ENCODE measurements at regions of chr5 and their contacts with region 1.

Region 1: DNA sequence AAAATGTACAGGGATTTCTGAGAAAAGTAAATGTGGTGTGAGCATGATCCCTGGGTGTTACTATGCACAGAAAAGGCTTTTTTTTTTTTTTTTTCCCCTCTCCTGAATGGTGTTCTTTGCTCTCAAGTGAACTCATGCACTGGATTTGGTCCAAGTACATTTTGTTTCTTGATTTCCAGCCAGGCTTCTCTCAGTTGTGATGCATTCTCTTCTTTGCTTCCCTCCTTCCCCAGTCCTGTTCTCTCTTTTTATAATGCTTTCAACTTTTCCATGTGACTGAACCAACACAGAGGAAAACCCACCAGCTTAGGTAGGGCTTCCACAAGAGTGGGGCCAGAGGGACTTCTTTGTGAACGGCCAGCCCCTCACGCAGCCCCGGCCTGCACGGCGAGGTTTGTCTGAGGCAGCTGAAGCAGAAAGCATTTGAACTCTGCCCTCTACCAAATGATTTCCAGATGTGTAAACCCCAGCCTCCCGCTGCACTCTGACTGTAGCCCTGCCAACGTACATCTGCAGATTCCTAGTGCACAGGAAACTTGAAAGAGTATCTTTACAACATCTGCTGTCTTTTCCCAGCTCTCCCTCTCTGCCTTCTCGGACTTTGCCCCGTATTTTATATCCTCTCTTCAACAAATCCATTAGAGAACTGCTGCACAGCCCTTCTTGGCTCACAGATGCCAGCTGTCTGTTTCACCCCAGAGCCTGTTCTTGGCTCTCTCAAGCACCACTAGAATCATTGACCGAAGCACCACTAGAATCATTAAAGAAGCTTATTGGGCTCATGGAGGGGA is 71.8 kb upstream of the CD180 start:
- DNase-seq: peak; percentile 80
- ATAC-seq: peak; percentile 89

Region 2: DNA sequence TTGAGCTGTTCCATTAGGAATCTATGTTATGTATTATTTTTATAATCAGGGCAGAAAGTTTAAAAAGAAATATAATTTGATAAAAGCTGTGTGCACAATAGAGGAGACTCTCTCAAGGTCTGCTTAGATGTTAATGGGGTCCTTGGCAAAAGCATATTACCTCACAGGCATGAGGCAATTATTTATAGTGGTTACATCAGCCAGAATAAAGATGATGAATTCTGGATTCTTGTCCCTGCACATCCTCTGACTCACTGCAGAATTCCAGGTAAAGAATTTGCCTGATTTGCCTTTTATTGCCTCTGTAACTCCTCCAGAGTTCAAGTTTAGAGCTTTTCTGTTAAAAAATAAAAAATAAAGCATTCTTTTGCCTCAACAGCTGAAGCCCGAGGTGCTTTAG is 418.6 kb before region 1 on chr5:
- intact Hi-C with region 1: no loop called
- DNase-seq: no peak
- ATAC-seq: no peak

Region 3: GRCh38 chr5:67395790-67396418 is 127.5 kb after region 1 on chr5:
- intact Hi-C with region 1: loop called (anchors 10 kb)
- DNase-seq: no peak
- ATAC-seq: no peak

Region 4: DNA sequence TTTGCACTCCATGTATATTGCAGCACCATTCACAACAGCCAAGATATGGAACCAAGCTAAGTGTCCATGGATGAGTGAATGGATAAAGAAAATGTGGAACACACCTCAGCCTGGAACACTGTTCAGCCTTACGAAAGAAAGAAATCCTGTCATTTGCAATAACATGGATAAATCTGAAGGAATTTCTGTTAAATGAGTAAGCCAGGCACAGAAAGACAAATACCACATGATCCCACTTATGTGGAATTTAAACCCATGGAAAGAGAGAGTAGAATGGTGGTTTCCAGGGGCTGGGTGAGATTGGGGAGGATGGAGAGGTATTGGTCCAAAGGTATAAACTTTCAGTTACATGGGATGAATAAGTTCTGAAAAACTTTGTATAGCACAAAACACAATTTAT is 157.1 kb after region 1 on chr5:
- intact Hi-C with region 1: no loop called
- DNase-seq: no peak
- ATAC-seq: no peak

Measured in Right ventricle myocardium superior (tissue), 1 donor.